Activated T-helper 1 cell treated with anti-CD3 and anti-CD28 coated beads, Interleukin-12 subunit alpha, Interleukin-12 subunit beta, Interleukin-2, Interleukin-4 antibody, amounts not matched to agents 30 ng/mL and 10 ng/mL and 1 ng/mL, durations not matched to agents 14 hours and 24 hours and 36 hours (primary cell): ENCODE measurements at regions of chr1 and their contacts with region 1.

Region 1: GRCh38 chr1:84298328-84298683 is 3.2 kb upstream of the SAMD13 start:
- DNase-seq: peak; percentile 46
- H3K4me3 Mint-ChIP-seq: peak overlapping the region; percentile 86
- H3K27ac Mint-ChIP-seq: peak overlapping the region; percentile 68
- H3K4me1 Mint-ChIP-seq: peaks cover 39% of the 10 kb centered on the region
- H3K27me3 Mint-ChIP-seq: peaks cover 5% of the 10 kb centered on the region

Region 2: GRCh38 chr1:83998498-83999315 is 299.6 kb before region 1 on chr1 and contains the start of gene TTLL7:
- intact Hi-C with region 1: loop called (anchors 5 kb)
- DNase-seq: peak; percentile 62
- H3K4me3 Mint-ChIP-seq: peak within 1 kb of the TSS; percentile 89
- H3K27ac Mint-ChIP-seq: peak within 1 kb of the TSS; percentile 56
- H3K4me1 Mint-ChIP-seq: peaks cover 24% of the 10 kb centered on the region
- H3K27me3 Mint-ChIP-seq: peaks cover 60% of the 10 kb centered on the region
- total RNA-seq, gene TTLL7: 0.15 and 0.29 TPM in 2 replicates

Region 3: GRCh38 chr1:84478876-84479868 is 180.9 kb after region 1 on chr1 and contains the start of gene RPF1:
- intact Hi-C with region 1: loop called (anchors 2 kb)
- DNase-seq: peak; percentile 70
- H3K4me3 Mint-ChIP-seq: peak within 1 kb of the TSS; percentile 98
- H3K27ac Mint-ChIP-seq: peak within 1 kb of the TSS; percentile 97
- H3K4me1 Mint-ChIP-seq: peaks cover 34% of the 10 kb centered on the region
- H3K27me3 Mint-ChIP-seq: peaks cover 28% of the 10 kb centered on the region
- total RNA-seq, gene RPF1: 65.2 and 65.5 TPM in 2 replicates

Region 4: DNA sequence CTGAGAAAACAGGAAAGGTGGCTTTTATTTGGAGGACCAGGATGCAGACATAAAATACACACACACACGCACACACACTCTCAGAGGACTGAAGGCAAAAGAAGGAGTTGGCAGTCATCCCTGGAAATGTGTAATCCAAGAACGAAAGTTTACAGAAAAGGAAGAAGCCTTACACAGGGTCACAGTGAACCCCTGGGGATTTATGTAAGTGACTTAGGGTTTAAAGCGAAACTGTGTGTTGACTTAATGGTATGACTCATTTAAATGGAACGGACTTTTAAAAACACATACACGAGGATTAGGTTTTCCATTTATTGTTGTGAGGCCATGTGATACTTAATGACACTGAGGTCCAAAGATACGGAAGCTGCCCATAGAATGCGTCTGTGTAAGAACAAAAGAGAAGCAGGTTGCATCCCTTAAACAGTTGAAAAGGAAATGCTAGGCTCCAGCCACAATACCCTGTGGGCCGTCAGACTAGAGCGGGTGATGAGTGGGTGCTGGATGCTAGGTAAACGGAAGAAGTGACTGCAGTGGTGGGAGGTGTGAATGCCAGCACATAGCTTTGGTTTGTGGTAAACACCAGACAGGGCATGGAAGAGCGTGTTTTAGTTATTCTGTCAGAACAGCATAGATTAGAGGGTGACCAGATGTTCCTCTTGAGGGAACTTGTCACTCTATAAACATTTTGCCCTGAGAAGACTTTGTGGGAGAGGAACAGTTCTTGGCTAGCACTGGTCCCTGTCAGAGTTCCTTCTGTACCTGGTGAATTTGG is 999.7 kb after region 1 on chr1:
- intact Hi-C with region 1: no loop called
- DNase-seq: peak; percentile 62
- H3K4me3 Mint-ChIP-seq: peak overlapping the region; percentile 1
- H3K27ac Mint-ChIP-seq: peak overlapping the region; percentile 80
- H3K4me1 Mint-ChIP-seq: peaks cover 34% of the 10 kb centered on the region
- H3K27me3 Mint-ChIP-seq: peaks cover 47% of the 10 kb centered on the region